ENCODE measurements at regions of chr22 and their contacts with region 1.

Region 1: GRCh38 chr22:40036591-40037225 is 42.0 kb downstream of the FAM83F start:
- DNase-seq: peak; percentile 73
- ATAC-seq: peak; percentile 88
- H3K4me3 ChIP-seq: no peak overlapping the region
- H3K4me3 Mint-ChIP-seq: no peak overlapping the region
- H3K27ac ChIP-seq: no peak overlapping the region
- H3K27ac Mint-ChIP-seq: no peak overlapping the region
- H3K4me1 ChIP-seq: peaks cover 0 to 5% of the 10 kb centered on the region in 2 donors
- H3K4me1 Mint-ChIP-seq: peaks cover 2% of the 10 kb centered on the region
- H3K27me3 ChIP-seq: peaks cover 0 to 43% (median 10%) of the 10 kb centered on the region in 4 experiments
- H3K27me3 Mint-ChIP-seq: peaks cover 26% of the 10 kb centered on the region
- CTCF ChIP-seq: peak; percentile 78

Region 2: GRCh38 chr22:39223201-39223641 is 813.5 kb before region 1 on chr22:
- CTCF ChIA-PET with region 1: no interaction called
- POLR2A ChIA-PET with region 1: no interaction called
- intact Hi-C with region 1: no loop called
- DNase-seq: peak; percentile 12
- ATAC-seq: no peak
- H3K4me3 ChIP-seq: no peak overlapping the region
- H3K4me3 Mint-ChIP-seq: no peak overlapping the region
- H3K27ac ChIP-seq: no peak overlapping the region
- H3K27ac Mint-ChIP-seq: no peak overlapping the region
- H3K4me1 ChIP-seq: no peaks in the 10 kb centered on the region
- H3K4me1 Mint-ChIP-seq: peaks cover 3% of the 10 kb centered on the region
- H3K27me3 ChIP-seq: peaks cover 0 to 46% (median 2%) of the 10 kb centered on the region in 4 experiments
- H3K27me3 Mint-ChIP-seq: peaks cover 45% of the 10 kb centered on the region
- CTCF ChIP-seq: no peak

Region 3: GRCh38 chr22:39496131-39496838 is 540.4 kb before region 1 on chr22:
- CTCF ChIA-PET with region 1: interaction called, 35 read pairs
- POLR2A ChIA-PET with region 1: interaction called, 3 read pairs
- intact Hi-C with region 1: loop called (anchors 1 kb)
- DNase-seq: peak; percentile 62
- ATAC-seq: peak; percentile 75
- H3K4me3 ChIP-seq: no peak overlapping the region
- H3K4me3 Mint-ChIP-seq: no peak overlapping the region
- H3K27ac ChIP-seq: no peak overlapping the region
- H3K27ac Mint-ChIP-seq: peak overlapping the region; percentile 70
- H3K4me1 ChIP-seq: peaks cover 4 to 7% of the 10 kb centered on the region in 2 donors
- H3K4me1 Mint-ChIP-seq: peaks cover 16% of the 10 kb centered on the region
- H3K27me3 ChIP-seq: no peaks in the 10 kb centered on the region
- H3K27me3 Mint-ChIP-seq: no peaks in the 10 kb centered on the region
- CTCF ChIP-seq: peak; percentile 73

Region 4: GRCh38 chr22:39622881-39623367 is 413.8 kb before region 1 on chr22:
- CTCF ChIA-PET with region 1: no interaction called
- POLR2A ChIA-PET with region 1: no interaction called
- intact Hi-C with region 1: loop called (anchors 5 kb)
- DNase-seq: peak; percentile 71
- ATAC-seq: peak; percentile 74
- H3K4me3 ChIP-seq: no peak overlapping the region
- H3K4me3 Mint-ChIP-seq: no peak overlapping the region
- H3K27ac ChIP-seq: no peak overlapping the region
- H3K27ac Mint-ChIP-seq: no peak overlapping the region
- H3K4me1 ChIP-seq: peaks cover 4 to 8% of the 10 kb centered on the region in 2 donors
- H3K4me1 Mint-ChIP-seq: peaks cover 4% of the 10 kb centered on the region
- H3K27me3 ChIP-seq: peaks cover 0 to 52% (median 13%) of the 10 kb centered on the region in 4 experiments
- H3K27me3 Mint-ChIP-seq: peaks cover 39% of the 10 kb centered on the region
- CTCF ChIP-seq: peak; percentile 60

Region 5: GRCh38 chr22:40224702-40225101 is 188.0 kb after region 1 on chr22:
- CTCF ChIA-PET with region 1: no interaction called
- POLR2A ChIA-PET with region 1: no interaction called
- intact Hi-C with region 1: no loop called
- DNase-seq: no peak
- ATAC-seq: no peak
- H3K4me3 ChIP-seq: no peak overlapping the region
- H3K4me3 Mint-ChIP-seq: no peak overlapping the region
- H3K27ac ChIP-seq: peak overlapping the region in 1 of 2 donors; percentile 28
- H3K27ac Mint-ChIP-seq: no peak overlapping the region
- H3K4me1 ChIP-seq: peaks cover 0 to 4% of the 10 kb centered on the region in 2 donors
- H3K4me1 Mint-ChIP-seq: peaks cover 39% of the 10 kb centered on the region
- H3K27me3 ChIP-seq: no peaks in the 10 kb centered on the region
- H3K27me3 Mint-ChIP-seq: no peaks in the 10 kb centered on the region
- CTCF ChIP-seq: no peak

Measured in B cell (primary cell).